HepG2 (cell line): ENCODE measurements at regions of chr2 and their contacts with region 1.

Region 1: DNA sequence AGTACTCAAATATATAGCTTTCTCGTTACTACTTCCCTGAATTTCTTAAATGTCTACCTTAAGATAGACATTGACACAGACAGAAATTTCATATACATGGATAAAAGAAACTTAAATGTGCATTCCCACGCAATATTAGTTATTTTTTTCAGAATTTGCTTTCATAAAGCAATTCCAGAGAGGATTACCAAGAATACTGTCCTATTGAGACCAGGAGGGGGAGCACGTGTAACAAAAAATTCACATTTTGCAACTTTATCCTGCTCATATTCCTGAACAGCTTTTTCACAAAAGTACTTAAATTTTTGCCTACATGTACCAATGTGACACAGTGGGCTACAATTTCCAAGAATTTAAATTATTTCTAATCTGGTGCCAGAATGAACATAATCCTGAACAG is 30.7 kb upstream of the ERCC3 start:
- DNase-seq: peak; percentile 59
- ATAC-seq: peak; percentile 79
- H3K4me3 ChIP-seq: no peak overlapping the region
- H3K27ac ChIP-seq: no peak overlapping the region
- H3K4me1 ChIP-seq: peaks cover 5% of the 10 kb centered on the region
- H3K27me3 ChIP-seq: no peaks in the 10 kb centered on the region
- CTCF ChIP-seq: peak; percentile 67
- EP300 ChIP-seq: no peak
- POLR2A ChIP-seq: no peak
- RAD21 ChIP-seq: peak; percentile 50; the same call in 1 of the 2 replicates

Region 2: DNA sequence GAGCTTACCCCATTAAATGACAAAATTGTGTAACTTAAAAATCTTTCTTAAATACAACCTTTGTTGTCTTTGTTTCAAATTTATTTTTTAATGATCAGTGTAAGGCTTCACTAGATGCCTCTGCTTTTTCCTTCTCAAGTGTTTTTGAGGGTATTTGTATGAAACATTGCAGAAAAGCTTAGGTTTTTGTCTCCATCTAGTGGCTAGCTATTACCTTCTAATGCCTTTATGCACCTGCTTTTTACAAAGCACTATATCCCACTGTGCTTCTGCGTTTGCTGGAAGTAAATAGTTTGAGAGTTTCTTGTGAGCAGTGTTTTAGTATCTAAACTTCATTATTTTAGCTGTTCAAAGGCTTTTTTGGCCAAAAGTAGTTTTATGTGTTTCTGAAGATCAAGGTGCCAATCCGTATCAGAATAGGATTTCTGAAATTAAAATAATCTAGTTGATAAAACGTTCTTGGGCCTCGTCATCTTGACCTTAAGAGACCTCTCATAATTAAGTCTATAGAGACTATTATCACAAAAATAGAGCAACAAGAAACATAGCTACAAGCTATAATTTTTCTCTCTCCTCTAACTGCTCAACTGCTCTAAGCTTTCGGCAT is 154.7 kb after region 1 on chr2:
- CTCF ChIA-PET with region 1: interaction called, 54 read pairs
- POLR2A ChIA-PET with region 1: interaction called, 3 read pairs
- in situ Hi-C with region 1: no loop called
- intact Hi-C with region 1: loop called (anchors 1 kb)
- DNase-seq: peak; percentile 73
- ATAC-seq: peak; percentile 86
- H3K4me3 ChIP-seq: no peak overlapping the region
- H3K27ac ChIP-seq: no peak overlapping the region
- H3K4me1 ChIP-seq: peaks cover 19% of the 10 kb centered on the region; the same call in 1 of the 2 replicates
- H3K27me3 ChIP-seq: no peaks in the 10 kb centered on the region
- CTCF ChIP-seq: peak; percentile 85
- EP300 ChIP-seq: no peak
- POLR2A ChIP-seq: no peak
- RAD21 ChIP-seq: peak; percentile 87

Region 3: DNA sequence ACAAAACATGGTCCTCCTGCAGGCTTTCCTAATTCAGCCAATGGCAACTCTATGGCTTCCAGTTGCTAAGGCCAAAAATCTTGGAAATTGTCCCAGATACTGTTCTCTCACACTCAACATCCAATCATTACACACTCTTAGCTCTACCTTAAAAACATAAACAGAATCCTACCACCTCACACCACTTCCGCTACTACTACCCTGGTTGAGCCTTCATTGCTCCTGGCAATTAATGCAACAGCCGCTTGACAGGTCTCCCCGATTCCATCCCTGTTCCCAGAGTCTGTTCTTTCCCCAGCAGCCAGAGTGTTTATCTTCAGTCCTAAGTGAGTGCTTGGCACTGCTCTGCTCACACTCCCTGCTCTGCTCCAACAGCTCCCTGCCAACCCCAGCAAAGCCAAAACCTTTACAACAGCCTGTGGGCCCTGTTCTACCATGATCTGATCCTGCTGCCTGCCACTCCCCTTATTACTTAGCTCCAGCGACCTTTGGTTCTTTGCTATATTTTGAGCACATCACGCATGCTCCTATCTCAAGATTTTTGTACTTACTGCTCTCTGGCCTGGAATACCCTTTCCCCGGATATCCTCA is 628.6 kb after region 1 on chr2:
- CTCF ChIA-PET with region 1: no interaction called
- POLR2A ChIA-PET with region 1: no interaction called
- in situ Hi-C with region 1: no loop called
- intact Hi-C with region 1: no loop called
- DNase-seq: no peak
- ATAC-seq: peak; percentile 23; the same call in 1 of the 3 replicates
- H3K4me3 ChIP-seq: no peak overlapping the region
- H3K27ac ChIP-seq: no peak overlapping the region
- H3K4me1 ChIP-seq: peaks cover 6% of the 10 kb centered on the region; the same call in 1 of the 2 replicates
- H3K27me3 ChIP-seq: no peaks in the 10 kb centered on the region
- CTCF ChIP-seq: no peak
- EP300 ChIP-seq: no peak
- POLR2A ChIP-seq: no peak
- RAD21 ChIP-seq: no peak